Mucosa of descending colon (tissue), 3 donors: ENCODE measurements at regions of chr10 and their contacts with region 1.

Region 1: GRCh38 chr10:114550756-114551635 is 107.1 kb downstream of the ABLIM1 start:
- DNase-seq: peak; percentile 67 to 91 (median 68)
- ATAC-seq: peak; percentile 85
- H3K4me3 ChIP-seq: no peak overlapping the region
- H3K4me1 ChIP-seq: peaks cover 12% of the 10 kb centered on the region
- CTCF ChIP-seq: no peak

Region 2: GRCh38 chr10:114304017-114304570 is 246.9 kb before region 1 on chr10:
- intact Hi-C with region 1: loop called in 1 of 2 experiments (anchors 10 kb)
- DNase-seq: peak; percentile 64 to 94 (median 77)
- ATAC-seq: peak; percentile 80
- H3K4me3 ChIP-seq: no peak overlapping the region
- H3K4me1 ChIP-seq: peaks cover 7% of the 10 kb centered on the region
- CTCF ChIP-seq: no peak

Region 3: GRCh38 chr10:114367041-114367818 is 183.8 kb before region 1 on chr10:
- intact Hi-C with region 1: no loop called
- DNase-seq: no peak
- ATAC-seq: peak; percentile 10
- H3K4me3 ChIP-seq: no peak overlapping the region
- H3K4me1 ChIP-seq: no peaks in the 10 kb centered on the region
- CTCF ChIP-seq: no peak

Region 4: GRCh38 chr10:114470956-114471905 is 79.8 kb before region 1 on chr10:
- intact Hi-C with region 1: loop called in 1 of 2 experiments (anchors 5 kb)
- DNase-seq: peak; percentile 71 to 79 (median 78)
- ATAC-seq: peak; percentile 91
- H3K4me3 ChIP-seq: no peak overlapping the region
- H3K4me1 ChIP-seq: peaks cover 18% of the 10 kb centered on the region
- CTCF ChIP-seq: peak; percentile 86

Region 5: DNA sequence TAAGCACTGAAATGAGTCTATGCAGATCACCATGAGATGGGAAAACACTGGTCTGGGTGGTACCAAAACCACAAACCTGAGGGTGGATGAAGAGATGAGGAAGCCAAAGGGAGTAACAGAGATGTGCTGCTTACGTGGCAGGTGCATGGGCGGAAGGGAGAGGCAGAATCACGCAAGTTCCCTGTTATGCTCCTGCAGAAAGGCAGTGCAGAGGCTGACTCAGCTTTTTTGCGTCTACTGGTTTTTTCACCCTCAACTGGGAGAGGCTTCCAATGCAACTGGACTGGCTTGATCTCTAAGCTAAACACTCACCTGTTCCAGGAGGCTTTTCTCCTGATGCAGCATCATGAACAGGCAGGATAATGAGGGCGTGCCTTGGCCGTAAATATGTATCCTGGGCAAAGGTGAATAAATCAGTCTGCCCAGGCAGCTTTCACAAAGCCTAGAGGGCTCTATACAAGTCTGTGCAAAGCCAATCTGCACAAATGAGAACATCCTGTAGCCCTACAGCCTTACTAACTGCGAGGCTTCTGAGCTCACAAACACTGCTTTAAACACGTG is 51.3 kb before region 1 on chr10:
- intact Hi-C with region 1: loop called in 1 of 2 experiments (anchors 10 kb)
- DNase-seq: peak; percentile 76 to 87 (median 80)
- ATAC-seq: peak; percentile 93
- H3K4me3 ChIP-seq: no peak overlapping the region
- H3K4me1 ChIP-seq: peaks cover 13% of the 10 kb centered on the region
- CTCF ChIP-seq: no peak

Region 6: GRCh38 chr10:114703377-114704107 is 152.5 kb after region 1 on chr10:
- intact Hi-C with region 1: loop called (anchors 5 to 10 kb)
- DNase-seq: no peak
- ATAC-seq: peak; percentile 49
- H3K4me3 ChIP-seq: no peak overlapping the region
- H3K4me1 ChIP-seq: no peaks in the 10 kb centered on the region
- CTCF ChIP-seq: no peak

Region 7: GRCh38 chr10:114779803-114780609 is 229.0 kb after region 1 on chr10:
- intact Hi-C with region 1: loop called (anchors 5 to 10 kb)
- DNase-seq: peak in 1 of 3 donors; percentile 52
- ATAC-seq: peak; percentile 95
- H3K4me3 ChIP-seq: no peak overlapping the region
- H3K4me1 ChIP-seq: peaks cover 18% of the 10 kb centered on the region
- CTCF ChIP-seq: no peak

Region 8: DNA sequence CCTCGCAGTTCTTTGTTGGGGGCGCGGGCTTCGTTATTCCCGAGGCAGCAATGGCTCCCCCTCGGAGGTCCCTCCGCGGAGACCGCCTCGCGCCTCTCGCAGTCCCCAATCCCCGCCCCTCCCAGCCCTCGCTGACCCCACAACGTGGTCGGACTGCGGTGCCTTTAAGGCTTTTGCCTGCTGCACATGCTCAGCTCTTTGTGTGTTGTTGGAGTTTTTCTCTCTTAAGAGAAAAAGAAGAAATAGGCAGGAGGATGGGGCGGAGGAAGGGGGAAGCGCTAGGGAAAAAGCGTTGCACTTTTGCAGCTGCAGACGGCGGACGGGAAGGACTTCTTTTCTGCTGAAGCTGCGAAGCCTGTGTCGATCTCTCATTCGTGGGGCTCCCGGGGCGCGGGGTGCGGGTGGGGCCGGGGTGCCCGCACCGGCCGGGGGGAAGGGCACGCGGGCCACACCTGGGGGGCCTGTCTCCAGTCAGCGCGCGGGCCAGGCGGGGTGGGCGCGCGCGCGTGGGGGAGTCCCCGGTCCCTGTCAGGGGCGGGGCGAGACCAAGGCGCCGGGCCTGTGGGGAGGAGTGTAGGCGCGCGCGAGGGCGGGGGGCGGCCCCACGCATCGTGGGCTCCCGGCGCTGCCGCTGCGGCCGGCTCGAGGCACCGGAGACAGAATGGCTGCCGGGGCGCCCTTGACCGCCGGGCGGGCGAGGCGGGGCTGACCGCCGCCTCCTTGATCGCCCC is 541.7 kb after region 1 on chr10:
- intact Hi-C with region 1: no loop called
- DNase-seq: peak in 1 of 3 donors; percentile 2
- ATAC-seq: peak; percentile 57
- H3K4me3 ChIP-seq: no peak overlapping the region
- H3K4me1 ChIP-seq: peaks cover 3% of the 10 kb centered on the region
- CTCF ChIP-seq: no peak